Heart right ventricle (tissue), 16 donors: ENCODE measurements at regions of chr19 and their contacts with region 1.

Region 1: DNA sequence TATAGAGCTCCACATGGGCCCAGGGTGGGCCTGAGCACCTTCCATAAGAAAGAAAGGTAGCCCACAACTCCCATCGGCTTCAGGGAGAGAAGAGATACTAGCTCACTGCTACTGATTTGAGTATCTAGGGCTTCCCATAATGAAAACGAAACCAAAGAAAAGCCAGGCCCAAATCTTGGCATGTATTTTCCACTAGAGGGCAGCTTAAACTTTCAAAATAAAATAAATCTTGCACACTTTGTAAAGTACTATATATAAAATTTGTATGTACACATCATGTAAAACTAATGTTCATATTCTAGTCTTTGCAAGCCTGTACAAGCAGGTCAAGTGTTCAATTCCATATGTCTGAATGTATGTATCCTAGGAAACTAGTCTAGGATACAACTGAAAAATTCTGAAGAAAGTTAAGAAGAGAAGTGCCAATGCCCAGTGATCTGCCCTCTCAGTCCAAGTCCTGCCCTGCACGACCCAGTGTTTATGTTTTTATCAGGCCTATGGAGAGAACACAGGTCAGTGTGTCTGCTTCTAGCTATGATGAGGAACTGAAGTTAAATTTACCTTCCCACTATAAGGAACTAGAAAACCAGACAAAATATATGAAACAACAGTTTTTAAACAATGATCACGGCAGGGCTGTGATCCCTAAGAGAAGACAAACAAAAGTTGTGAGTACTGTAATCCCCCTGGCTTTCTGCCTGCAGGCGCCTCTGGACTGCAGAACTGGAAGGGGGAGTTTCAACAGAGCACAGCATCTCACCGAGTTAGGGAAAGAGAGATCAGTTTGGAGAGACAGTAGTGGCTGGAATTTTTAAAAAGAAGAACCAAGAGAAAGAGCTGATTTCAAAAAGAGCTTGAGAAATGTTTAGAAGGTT is 475.7 kb downstream of the UQCRFS1 start:
- DNase-seq: no peak
- ATAC-seq: peak in 6 of 8 donors; percentile 47 to 71 (median 66)
- H3K4me3 ChIP-seq: peak overlapping the region in 1 of 10 donors; percentile 23
- H3K27ac ChIP-seq: peak overlapping the region in 2 of 10 donors; percentile 45 to 48
- H3K4me1 ChIP-seq: peaks cover 0 to 11% (median 5%) of the 10 kb centered on the region in 9 donors
- H3K27me3 ChIP-seq: no peaks in the 10 kb centered on the region
- CTCF ChIP-seq: peak; percentile 29 to 77 (median 60)

Region 2: GRCh38 chr19:28823338-28823961 is 86.2 kb after region 1 on chr19:
- intact Hi-C with region 1: no loop called
- DNase-seq: no peak
- ATAC-seq: no peak
- H3K4me3 ChIP-seq: no peak overlapping the region
- H3K27ac ChIP-seq: no peak overlapping the region
- H3K4me1 ChIP-seq: no peaks in the 10 kb centered on the region
- H3K27me3 ChIP-seq: no peaks in the 10 kb centered on the region
- CTCF ChIP-seq: no peak

Region 3: DNA sequence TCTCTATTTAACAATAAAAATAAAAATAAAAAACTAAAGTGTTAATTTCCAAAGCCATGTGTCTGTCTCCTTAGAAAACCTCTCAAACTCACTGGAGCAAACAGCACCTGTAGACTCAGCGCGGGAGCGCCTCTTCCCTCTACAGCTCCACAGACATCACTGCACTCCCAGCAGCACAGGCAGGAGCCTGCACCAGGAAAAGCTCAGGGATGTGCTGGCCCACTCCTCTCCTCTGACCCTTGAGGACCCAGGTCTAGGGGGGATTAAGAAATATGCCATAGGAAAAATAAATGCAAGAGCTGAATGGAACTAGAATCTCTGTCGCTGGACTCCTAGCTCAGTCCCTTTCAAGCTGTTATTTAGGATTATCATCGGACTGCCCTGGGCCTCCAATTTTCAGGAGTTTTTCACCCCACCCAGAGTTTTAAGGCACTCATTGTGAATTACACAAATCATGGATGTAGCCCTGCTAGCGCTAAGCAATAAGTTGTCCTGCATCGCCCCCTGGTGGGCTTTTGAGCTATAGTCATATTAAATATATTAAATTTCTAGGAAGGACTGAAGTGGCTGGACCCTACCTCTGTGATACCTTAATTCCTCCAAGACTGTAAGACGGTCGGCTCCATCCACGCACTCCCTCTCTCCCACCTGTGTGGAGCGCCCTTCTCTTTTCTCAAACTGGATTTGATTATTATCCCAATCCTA is 141.8 kb after region 1 on chr19:
- intact Hi-C with region 1: loop called (anchors 1 to 5 kb)
- DNase-seq: peak; percentile 61 to 64
- ATAC-seq: peak in 5 of 8 donors; percentile 15 to 38 (median 29)
- H3K4me3 ChIP-seq: no peak overlapping the region
- H3K27ac ChIP-seq: no peak overlapping the region
- H3K4me1 ChIP-seq: peaks cover 0 to 20% (median 6%) of the 10 kb centered on the region in 9 donors
- H3K27me3 ChIP-seq: peaks cover 0 to 4% (median 0%) of the 10 kb centered on the region in 7 donors
- CTCF ChIP-seq: peak; percentile 58 to 82 (median 71)

Region 4: GRCh38 chr19:29263305-29264135 is 526.3 kb after region 1 on chr19:
- intact Hi-C with region 1: loop called in 8 of 10 experiments (anchors 5 to 10 kb)
- DNase-seq: peak in 1 of 2 donors; percentile 22
- ATAC-seq: peak in 5 of 8 donors; percentile 23 to 53 (median 24)
- H3K4me3 ChIP-seq: no peak overlapping the region
- H3K27ac ChIP-seq: no peak overlapping the region
- H3K4me1 ChIP-seq: no peaks in the 10 kb centered on the region
- H3K27me3 ChIP-seq: peaks cover 0 to 33% (median 8%) of the 10 kb centered on the region in 7 donors
- CTCF ChIP-seq: peak; percentile 37 to 84 (median 71)

Region 5: GRCh38 chr19:29528350-29528945 is 791.2 kb after region 1 on chr19:
- intact Hi-C with region 1: loop called in 1 of 10 experiments (anchors 10 kb)
- DNase-seq: peak; percentile 25 to 49
- ATAC-seq: peak; percentile 62 to 83 (median 80)
- H3K4me3 ChIP-seq: peak overlapping the region in 8 of 10 donors; percentile 3 to 44 (median 32)
- H3K27ac ChIP-seq: no peak overlapping the region
- H3K4me1 ChIP-seq: peaks cover 6 to 47% (median 40%) of the 10 kb centered on the region in 9 donors
- H3K27me3 ChIP-seq: peaks cover 54 to 100% (median 99%) of the 10 kb centered on the region in 7 donors
- CTCF ChIP-seq: peak; percentile 32 to 86 (median 74)